GM10248 (cell line): ENCODE measurements at regions of chr2 and their contacts with region 1.

Region 1: GRCh38 chr2:241315093-241315878 is at the start of gene HDLBP:
- DNase-seq: peak; percentile 98
- CTCF ChIP-seq: peak; percentile 51

Region 2: DNA sequence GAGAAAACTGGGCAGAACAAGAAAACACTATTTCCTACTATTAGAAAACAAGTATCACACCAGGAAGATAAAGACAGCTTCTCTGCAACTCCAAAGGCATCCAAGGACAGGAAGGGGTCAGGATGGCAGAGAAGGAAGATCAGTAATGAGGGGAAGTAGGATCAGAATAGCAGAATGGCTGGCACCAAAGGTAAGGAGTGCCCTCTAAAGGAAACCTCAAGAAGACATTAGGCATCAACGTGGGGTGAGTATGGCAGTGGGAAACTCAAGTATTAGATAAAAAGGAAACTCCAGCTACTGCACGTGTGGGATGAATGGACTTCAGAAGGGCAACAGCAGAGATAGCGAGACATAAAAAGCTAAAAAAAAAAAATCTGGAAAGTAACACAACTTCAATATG is 25.7 kb before region 1 on chr2:
- CTCF ChIA-PET with region 1: interaction called, 7 read pairs
- POLR2A ChIA-PET with region 1: interaction called, 10 read pairs
- DNase-seq: no peak
- CTCF ChIP-seq: no peak